Activated naive CD4-positive, alpha-beta T cell treated with anti-CD3 and anti-CD28 coated beads, Interleukin-2, amount 10 ng/mL, durations not matched to agents 7 days and 5 days (primary cell): ENCODE measurements at regions of chr21 and their contacts with region 1.

Region 1: GRCh38 chr21:32597205-32597604 is 11.9 kb upstream of the TCP10L start:
- DNase-seq: no peak
- H3K4me3 Mint-ChIP-seq: no peak overlapping the region
- H3K27ac Mint-ChIP-seq: no peak overlapping the region
- H3K4me1 Mint-ChIP-seq: peaks cover 10% of the 10 kb centered on the region
- H3K27me3 Mint-ChIP-seq: no peaks in the 10 kb centered on the region

Region 2: GRCh38 chr21:32403201-32403777 is 193.9 kb before region 1 on chr21:
- CTCF ChIA-PET with region 1: interaction called, 95 read pairs
- DNase-seq: peak; percentile 64
- H3K4me3 Mint-ChIP-seq: no peak overlapping the region
- H3K27ac Mint-ChIP-seq: no peak overlapping the region
- H3K4me1 Mint-ChIP-seq: no peaks in the 10 kb centered on the region
- H3K27me3 Mint-ChIP-seq: peaks cover 29% of the 10 kb centered on the region

Region 3: DNA sequence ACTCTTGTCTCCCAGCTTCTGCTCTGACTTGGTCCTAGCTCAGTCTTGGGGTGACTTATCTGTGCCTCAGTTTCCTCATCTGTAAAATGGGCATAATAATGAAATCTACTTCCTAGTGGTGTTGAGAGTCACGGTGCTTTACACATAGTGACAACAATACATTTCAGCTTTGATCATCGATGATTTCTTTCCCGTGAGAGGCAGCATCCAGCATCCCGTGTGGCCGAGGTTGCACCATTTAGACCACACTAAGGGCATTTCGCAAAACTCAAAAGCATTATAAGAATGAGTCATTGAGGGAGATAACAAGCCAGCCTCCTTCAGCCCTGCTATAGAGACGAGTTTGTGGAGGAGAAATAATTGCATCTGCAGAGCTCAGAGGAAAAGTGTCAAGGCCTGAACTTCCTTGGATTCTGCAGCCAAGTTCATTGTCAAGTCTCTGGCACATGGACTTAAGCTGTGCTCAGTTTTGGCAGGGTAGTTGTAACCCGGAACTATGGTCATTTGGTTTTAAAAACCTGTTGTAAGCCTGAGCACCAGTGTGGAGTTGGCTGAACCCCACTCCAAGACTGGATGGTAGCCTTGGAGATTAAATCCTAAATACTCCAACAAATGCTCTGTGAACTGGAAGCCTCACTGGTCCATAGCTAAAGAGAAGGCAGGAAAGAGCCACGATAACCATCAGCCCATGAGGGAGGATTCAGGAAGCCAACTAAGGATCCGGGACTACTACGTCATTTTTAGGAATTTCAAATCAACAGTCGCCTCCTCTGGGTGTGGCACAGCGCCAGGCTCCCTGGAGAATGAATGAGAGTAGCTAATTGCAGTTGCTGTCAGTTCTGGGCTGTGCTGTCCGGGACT is 76.1 kb before region 1 on chr21:
- CTCF ChIA-PET with region 1: no interaction called
- DNase-seq: no peak
- H3K4me3 Mint-ChIP-seq: no peak overlapping the region
- H3K27ac Mint-ChIP-seq: no peak overlapping the region
- H3K4me1 Mint-ChIP-seq: no peaks in the 10 kb centered on the region
- H3K27me3 Mint-ChIP-seq: peaks cover 3% of the 10 kb centered on the region

Region 4: DNA sequence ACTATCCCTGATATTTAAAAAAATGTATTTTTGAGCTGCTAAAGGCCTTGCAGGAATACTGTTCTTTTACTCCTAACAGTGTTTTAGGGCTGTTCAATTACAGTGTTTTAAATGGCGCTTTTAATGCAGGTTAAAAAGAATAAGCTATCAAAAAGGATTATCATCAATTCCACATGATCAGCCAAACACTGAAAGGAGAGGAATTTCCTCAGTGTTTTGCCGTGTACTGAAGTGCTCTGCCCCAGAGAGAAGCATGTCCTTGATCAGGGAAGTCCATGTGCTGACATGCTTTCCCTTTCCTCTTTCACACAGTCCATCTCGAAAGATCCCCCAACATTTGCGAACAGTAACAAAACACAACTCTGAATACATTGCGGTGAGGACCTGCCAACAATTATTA is 11.6 kb after region 1 on chr21:
- CTCF ChIA-PET with region 1: interaction called, 10 read pairs
- DNase-seq: no peak
- H3K4me3 Mint-ChIP-seq: no peak overlapping the region
- H3K27ac Mint-ChIP-seq: no peak overlapping the region
- H3K4me1 Mint-ChIP-seq: peaks cover 24% of the 10 kb centered on the region
- H3K27me3 Mint-ChIP-seq: peaks cover 14% of the 10 kb centered on the region